Breast epithelium (tissue), 4 donors: ENCODE measurements at regions of chr20 and their contacts with region 1.

Region 1: DNA sequence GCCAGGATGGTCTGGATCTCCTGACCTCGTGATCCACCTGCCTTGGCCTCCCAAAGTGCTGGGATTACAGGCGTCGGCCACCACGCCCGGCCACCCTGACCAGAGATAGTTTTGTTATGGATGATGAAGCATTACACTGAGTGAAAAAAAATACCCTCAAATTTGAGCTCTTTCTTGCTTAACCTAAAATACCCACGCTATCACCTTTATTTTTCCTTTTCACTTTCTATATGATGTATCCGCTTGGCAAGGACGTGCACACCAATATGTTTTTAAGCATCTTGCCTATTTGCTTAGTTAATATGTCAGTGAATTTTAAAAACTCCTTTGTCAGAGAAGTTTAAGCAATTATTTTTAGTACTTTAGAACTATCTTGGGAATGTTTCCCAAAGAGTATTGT is 150.4 kb downstream of the INSM1 start:
- DNase-seq: no peak
- H3K4me3 ChIP-seq: no peak overlapping the region
- H3K27ac ChIP-seq: no peak overlapping the region
- H3K4me1 ChIP-seq: no peaks in the 10 kb centered on the region
- H3K27me3 ChIP-seq: no peaks in the 10 kb centered on the region
- CTCF ChIP-seq: no peak
- POLR2A ChIP-seq: no peak

Region 2: DNA sequence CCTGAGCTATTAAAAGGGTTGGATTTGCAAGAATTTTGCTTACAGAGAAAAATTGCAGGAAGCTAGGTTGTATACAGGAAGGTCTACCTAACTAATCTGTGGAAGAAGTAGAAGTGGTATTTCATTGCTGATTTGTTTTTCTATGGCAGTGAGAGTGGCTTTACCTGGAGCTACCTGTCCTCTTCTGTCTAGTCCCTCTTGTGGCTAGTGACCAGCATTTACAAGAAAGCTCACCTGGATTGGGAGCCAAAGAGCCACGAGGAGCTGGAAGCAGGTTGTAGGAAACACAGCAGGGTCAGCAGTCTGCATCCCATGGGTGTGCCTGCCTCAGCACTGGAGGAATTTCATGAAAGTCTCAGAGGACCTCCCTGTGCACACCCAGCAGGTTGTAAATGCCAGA is 314.5 kb after region 1 on chr20:
- intact Hi-C with region 1: loop called (anchors 5 kb)
- DNase-seq: no peak
- H3K4me3 ChIP-seq: no peak overlapping the region
- H3K27ac ChIP-seq: no peak overlapping the region
- H3K4me1 ChIP-seq: no peaks in the 10 kb centered on the region
- H3K27me3 ChIP-seq: peaks cover 0 to 18% of the 10 kb centered on the region in 2 donors
- CTCF ChIP-seq: no peak
- POLR2A ChIP-seq: no peak